Right lobe of liver (tissue), 6 donors: ENCODE measurements at regions of chr10 and their contacts with region 1.

Region 1: GRCh38 chr10:89466599-89467035 is 52.2 kb downstream of the IFIT5 start:
- DNase-seq: peak in 1 of 3 donors; percentile 53
- ATAC-seq: peak; percentile 83 to 93 (median 86)
- H3K4me3 ChIP-seq: no peak overlapping the region
- H3K27ac ChIP-seq: peak overlapping the region in 1 of 3 donors; percentile 18
- H3K4me1 ChIP-seq: peaks cover 0 to 20% (median 7%) of the 10 kb centered on the region in 4 donors
- H3K27me3 ChIP-seq: no peaks in the 10 kb centered on the region
- CTCF ChIP-seq: peak; percentile 60 to 74 (median 72)
- POLR2A ChIP-seq: no peak

Region 2: DNA sequence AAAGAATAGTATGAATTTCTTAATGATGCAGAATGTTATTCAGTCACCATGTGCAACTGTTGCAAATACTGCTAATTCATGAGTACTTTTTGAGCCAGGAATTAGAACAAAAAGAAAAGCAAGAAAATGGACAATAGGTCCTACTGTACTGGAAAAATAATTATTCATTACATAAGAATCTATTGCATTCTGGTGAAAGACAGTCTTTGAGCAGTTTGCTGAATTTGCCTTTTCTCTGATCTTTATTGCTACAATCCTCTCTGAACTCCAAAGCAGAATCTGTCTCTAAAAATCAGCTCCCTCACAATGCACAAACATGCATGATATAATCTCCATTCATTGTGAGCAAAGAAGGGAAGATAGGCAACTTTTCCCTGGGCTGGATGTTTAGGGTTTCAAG is 151.9 kb before region 1 on chr10:
- intact Hi-C with region 1: no loop called
- DNase-seq: no peak
- ATAC-seq: no peak
- H3K4me3 ChIP-seq: no peak overlapping the region
- H3K27ac ChIP-seq: no peak overlapping the region
- H3K4me1 ChIP-seq: no peaks in the 10 kb centered on the region
- H3K27me3 ChIP-seq: no peaks in the 10 kb centered on the region
- CTCF ChIP-seq: no peak
- POLR2A ChIP-seq: no peak

Region 3: GRCh38 chr10:89553064-89553734 is 86.6 kb after region 1 on chr10:
- intact Hi-C with region 1: loop called in 1 of 2 experiments (anchors 10 kb)
- DNase-seq: no peak
- ATAC-seq: peak in 1 of 4 donors; percentile 75
- H3K4me3 ChIP-seq: no peak overlapping the region
- H3K27ac ChIP-seq: no peak overlapping the region
- H3K4me1 ChIP-seq: peaks cover 0 to 8% (median 0%) of the 10 kb centered on the region in 4 donors
- H3K27me3 ChIP-seq: no peaks in the 10 kb centered on the region
- CTCF ChIP-seq: no peak
- POLR2A ChIP-seq: no peak